Stomach (tissue), 19 donors: ENCODE measurements at regions of chr11 and their contacts with region 1.

Region 1: GRCh38 chr11:33329705-33330329 is 72.6 kb downstream of the HIPK3 start:
- DNase-seq: peak; percentile 55 to 88
- H3K4me3 ChIP-seq: no peak overlapping the region
- H3K27ac ChIP-seq: no peak overlapping the region
- H3K4me1 ChIP-seq: peaks cover 9 to 69% (median 38%) of the 10 kb centered on the region in 4 donors
- H3K27me3 ChIP-seq: no peaks in the 10 kb centered on the region
- CTCF ChIP-seq: peak in 5 of 7 experiments; percentile 20 to 65 (median 49)
- EP300 ChIP-seq: no peak
- POLR2A ChIP-seq: no peak

Region 2: DNA sequence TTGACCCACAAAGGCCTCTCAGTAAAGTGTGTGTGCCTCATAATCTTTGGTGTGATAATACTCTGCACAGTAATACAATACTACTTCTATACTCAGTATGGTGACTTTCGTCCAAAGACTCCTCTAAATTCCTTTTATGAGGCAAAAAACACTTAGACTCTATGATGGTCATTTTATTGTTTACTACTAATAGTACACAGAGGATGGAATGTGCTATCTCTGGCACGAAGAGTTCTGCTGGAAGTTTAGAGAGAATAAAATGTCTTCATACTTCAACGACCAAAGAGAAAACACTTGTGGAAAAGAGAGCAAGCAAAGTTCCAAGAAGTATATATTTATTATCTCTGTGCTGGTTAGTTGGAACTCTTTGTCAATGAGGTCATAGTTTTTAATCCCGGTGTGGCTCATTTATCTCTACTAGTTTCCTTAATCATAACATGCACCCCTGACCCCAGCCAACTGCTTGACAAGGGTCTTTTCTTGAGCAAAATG is 161.1 kb before region 1 on chr11:
- intact Hi-C with region 1: loop called (anchors 5 kb)
- DNase-seq: peak in 1 of 2 donors; percentile 54
- H3K4me3 ChIP-seq: no peak overlapping the region
- H3K27ac ChIP-seq: peak overlapping the region in 1 of 5 donors; percentile 42
- H3K4me1 ChIP-seq: peaks cover 0 to 38% (median 10%) of the 10 kb centered on the region in 4 donors
- H3K27me3 ChIP-seq: no peaks in the 10 kb centered on the region
- CTCF ChIP-seq: no peak
- EP300 ChIP-seq: no peak
- POLR2A ChIP-seq: no peak

Region 3: DNA sequence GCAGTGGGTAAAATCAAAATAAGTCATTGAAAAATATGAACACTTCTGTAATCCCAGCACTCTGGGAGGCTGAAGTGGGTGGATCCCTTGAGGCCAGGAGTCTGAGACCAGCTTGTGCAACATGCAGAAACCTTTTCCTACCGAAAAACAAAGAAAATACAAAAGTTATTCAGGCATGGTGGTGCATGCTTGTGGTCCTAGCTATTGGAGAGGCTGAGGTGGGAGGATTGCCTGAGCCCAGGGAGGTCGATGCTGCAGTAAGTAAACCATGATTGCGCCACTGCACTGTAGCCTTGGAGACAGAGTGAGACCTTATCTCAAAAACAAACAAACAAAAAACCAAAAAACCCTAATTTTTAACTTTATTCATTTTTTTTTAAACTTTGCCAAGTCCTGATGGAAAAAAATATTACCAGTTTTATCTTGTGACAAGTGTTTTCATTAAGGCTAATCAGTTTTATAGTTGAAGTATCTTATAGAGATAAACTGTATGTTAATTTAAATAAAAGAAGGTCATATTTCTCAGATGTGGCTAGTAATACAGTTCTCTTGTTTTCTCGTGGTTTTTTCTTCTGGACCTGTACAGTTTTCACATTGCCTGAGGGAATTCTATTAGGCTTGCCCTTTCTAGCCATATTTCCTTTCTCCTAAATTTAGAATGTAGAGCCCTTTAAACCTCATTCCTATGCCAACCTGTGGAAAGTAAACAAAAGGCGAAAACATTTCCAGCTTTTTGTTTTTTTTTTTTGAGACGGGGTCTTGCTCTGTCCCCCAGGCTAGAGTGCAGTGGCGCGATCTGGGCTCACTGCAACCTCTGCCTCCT is 63.2 kb before region 1 on chr11:
- intact Hi-C with region 1: no loop called
- DNase-seq: peak in 1 of 2 donors; percentile 63
- H3K4me3 ChIP-seq: no peak overlapping the region
- H3K27ac ChIP-seq: peak overlapping the region in 2 of 5 donors; percentile 29 to 43
- H3K4me1 ChIP-seq: peaks cover 45 to 99% (median 68%) of the 10 kb centered on the region in 4 donors
- H3K27me3 ChIP-seq: no peaks in the 10 kb centered on the region
- CTCF ChIP-seq: no peak
- EP300 ChIP-seq: no peak
- POLR2A ChIP-seq: no peak